Activated CD4-positive, alpha-beta T cell treated with anti-CD3 and anti-CD28 coated beads, Interleukin-2, amount 10 ng/mL, durations not matched to agents 24 days and 14 days (primary cell): ENCODE measurements at regions of chr15 and their contacts with region 1.

Region 1: DNA sequence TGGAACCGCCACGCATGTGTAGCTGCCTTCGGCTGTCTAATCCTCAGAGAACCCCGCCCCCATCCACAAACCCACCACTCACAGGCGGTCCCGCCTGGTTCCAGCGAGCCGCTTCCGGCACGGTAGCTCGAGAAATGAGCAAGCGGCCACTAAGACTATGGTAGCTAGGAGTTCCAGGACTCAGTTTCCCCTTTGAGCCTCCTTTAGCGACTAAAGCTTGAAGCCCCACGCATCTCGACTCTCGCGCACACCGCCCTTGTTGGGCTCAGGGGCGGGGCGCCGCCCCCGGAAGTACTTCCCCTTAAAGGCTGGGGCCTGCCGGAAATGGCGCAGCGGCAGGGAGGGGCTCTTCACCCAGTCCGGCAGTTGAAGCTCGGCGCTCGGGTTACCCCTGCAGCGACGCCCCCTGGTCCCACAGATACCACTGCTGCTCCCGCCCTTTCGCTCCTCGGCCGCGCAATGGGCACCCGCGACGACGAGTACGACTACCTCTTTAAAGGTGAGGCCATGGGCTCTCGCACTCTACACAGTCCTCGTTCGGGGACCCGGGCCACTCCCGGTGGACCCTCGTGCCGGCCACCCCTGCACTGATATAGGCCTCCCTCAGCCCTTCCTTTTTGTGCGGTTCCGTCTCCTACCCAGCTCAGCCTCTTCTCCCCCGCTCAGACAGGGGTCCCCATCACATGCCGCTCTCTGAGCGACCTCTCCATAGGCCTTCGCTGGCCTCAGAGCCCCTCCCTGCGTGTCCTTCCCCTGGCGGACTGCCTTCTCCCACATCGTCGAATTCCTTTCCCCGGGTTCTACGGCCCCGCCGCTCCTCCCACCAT is at the start of gene RAB11A:
- DNase-seq: peak; percentile 98
- H3K4me3 Mint-ChIP-seq: peak within 1 kb of the TSS; percentile 100
- H3K27ac Mint-ChIP-seq: peak within 1 kb of the TSS; percentile 99
- H3K4me1 Mint-ChIP-seq: peaks cover 32% of the 10 kb centered on the region
- H3K27me3 Mint-ChIP-seq: peaks cover 4% of the 10 kb centered on the region
- total RNA-seq, gene RAB11A: 163 TPM in 2 replicates

Region 2: GRCh38 chr15:65792130-65792987 is 77.0 kb before region 1 on chr15 and contains the start of gene DENND4A:
- intact Hi-C with region 1: loop called (anchors 1 kb)
- DNase-seq: peak; percentile 100
- H3K4me3 Mint-ChIP-seq: peak within 1 kb of the TSS; percentile 91
- H3K27ac Mint-ChIP-seq: peak within 1 kb of the TSS; percentile 99
- H3K4me1 Mint-ChIP-seq: peaks cover 56% of the 10 kb centered on the region
- H3K27me3 Mint-ChIP-seq: no peaks in the 10 kb centered on the region
- total RNA-seq, gene DENND4A: 44.2 and 48.3 TPM in 2 replicates

Region 3: GRCh38 chr15:65887565-65887964 is 18.2 kb after region 1 on chr15:
- intact Hi-C with region 1: loop called (anchors 1 kb)
- DNase-seq: peak; percentile 91
- H3K4me3 Mint-ChIP-seq: peak overlapping the region; percentile 66
- H3K27ac Mint-ChIP-seq: peak overlapping the region; percentile 90
- H3K4me1 Mint-ChIP-seq: peaks cover 66% of the 10 kb centered on the region
- H3K27me3 Mint-ChIP-seq: no peaks in the 10 kb centered on the region

Region 4: GRCh38 chr15:66080717-66081398 is 211.5 kb after region 1 on chr15:
- intact Hi-C with region 1: loop called (anchors 10 kb)
- DNase-seq: no peak
- H3K4me3 Mint-ChIP-seq: no peak overlapping the region
- H3K27ac Mint-ChIP-seq: no peak overlapping the region
- H3K4me1 Mint-ChIP-seq: no peaks in the 10 kb centered on the region
- H3K27me3 Mint-ChIP-seq: peaks cover 20% of the 10 kb centered on the region